ENCODE measurements at regions of chr6 and their contacts with region 1.

Region 1: DNA sequence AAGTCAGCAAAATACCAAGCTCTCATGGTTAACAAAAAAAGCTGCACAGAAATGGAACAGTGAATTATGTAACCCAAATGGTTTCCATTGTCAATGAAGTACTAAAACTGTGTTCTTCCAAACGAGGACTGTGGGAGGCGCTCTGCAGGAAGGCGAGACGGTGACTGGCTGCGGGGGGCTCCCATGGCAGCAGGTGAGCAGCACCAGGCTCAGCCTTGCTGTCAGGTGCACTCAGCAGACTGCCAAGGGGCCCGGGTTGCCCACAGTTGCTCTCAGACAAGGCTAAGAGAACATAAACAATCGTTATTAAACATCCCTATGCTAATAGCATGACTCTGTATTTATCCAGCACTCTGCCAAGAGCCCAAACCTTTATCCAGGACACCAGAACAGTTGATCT is 630.3 kb upstream of the ARID1B start:
- DNase-seq: no peak
- H3K4me3 ChIP-seq: no peak overlapping the region
- H3K27ac ChIP-seq: no peak overlapping the region
- H3K4me1 ChIP-seq: no peaks in the 10 kb centered on the region
- H3K27me3 ChIP-seq: no peaks in the 10 kb centered on the region
- CTCF ChIP-seq: no peak
- EP300 ChIP-seq: no peak
- POLR2A ChIP-seq: no peak

Region 2: DNA sequence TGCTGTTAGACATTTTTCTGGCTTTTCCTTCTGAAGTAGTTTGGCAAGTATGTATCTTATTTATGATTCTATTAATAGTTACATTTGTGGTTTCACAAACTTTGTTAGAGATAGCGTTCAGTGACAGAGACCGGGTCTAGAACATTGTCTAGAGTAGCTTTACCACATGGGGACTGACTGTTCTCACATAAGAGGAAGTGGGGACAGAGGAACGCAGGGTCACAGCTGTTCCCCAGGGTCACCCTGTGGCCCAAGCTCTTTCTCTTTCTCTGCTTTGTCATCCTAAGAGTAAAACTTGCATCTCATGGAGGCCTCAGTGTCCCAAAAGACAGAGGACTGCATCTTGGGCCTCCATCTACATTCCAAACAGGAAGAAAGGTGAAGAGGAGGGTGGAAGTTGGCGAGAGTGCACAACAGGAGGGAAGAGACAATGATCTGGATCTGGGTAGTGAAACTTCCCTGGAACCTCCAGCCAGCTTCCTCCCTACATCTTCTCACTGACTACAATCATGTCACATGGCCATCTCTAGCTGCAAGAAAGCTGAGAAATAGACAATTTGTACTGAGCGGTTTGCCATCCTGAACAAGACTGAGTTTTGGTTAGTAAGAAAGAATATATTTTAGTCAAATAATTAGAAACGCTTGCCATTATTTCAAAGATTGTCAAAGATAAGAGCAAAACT is 15.5 kb before region 1 on chr6:
- in situ Hi-C with region 1: no loop called
- intact Hi-C with region 1: loop called (anchors 1 kb)
- DNase-seq: peak; percentile 14
- H3K4me3 ChIP-seq: no peak overlapping the region
- H3K27ac ChIP-seq: no peak overlapping the region
- H3K4me1 ChIP-seq: no peaks in the 10 kb centered on the region
- H3K27me3 ChIP-seq: no peaks in the 10 kb centered on the region
- CTCF ChIP-seq: no peak
- EP300 ChIP-seq: no peak
- POLR2A ChIP-seq: no peak

Region 3: DNA sequence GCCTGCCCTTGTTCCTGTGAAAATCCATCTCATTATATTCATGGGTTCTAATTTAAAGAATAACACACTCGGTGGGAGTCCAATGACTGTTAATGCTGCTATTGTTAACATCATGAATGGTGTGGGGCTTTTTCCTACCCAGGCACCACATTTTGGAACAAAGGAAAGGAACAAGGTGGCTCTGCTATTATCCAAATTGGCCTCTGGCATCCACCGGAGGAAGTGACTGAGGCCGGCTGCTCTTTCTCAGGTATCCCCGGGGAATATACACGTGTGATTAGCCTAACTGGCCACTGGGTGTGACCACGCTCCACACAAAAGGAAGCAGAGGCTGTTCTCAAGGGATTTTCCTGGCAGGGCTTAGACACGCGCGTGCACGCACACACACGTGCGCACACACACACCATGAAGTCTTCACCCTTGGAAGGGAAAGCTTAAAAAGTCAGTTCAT is 29.1 kb after region 1 on chr6:
- in situ Hi-C with region 1: no loop called
- intact Hi-C with region 1: no loop called
- DNase-seq: peak; percentile 8
- H3K4me3 ChIP-seq: no peak overlapping the region
- H3K27ac ChIP-seq: no peak overlapping the region
- H3K4me1 ChIP-seq: no peaks in the 10 kb centered on the region
- H3K27me3 ChIP-seq: no peaks in the 10 kb centered on the region
- CTCF ChIP-seq: peak in 3 of 5 experiments; percentile 10 to 26 (median 10)
- EP300 ChIP-seq: no peak
- POLR2A ChIP-seq: no peak

Region 4: DNA sequence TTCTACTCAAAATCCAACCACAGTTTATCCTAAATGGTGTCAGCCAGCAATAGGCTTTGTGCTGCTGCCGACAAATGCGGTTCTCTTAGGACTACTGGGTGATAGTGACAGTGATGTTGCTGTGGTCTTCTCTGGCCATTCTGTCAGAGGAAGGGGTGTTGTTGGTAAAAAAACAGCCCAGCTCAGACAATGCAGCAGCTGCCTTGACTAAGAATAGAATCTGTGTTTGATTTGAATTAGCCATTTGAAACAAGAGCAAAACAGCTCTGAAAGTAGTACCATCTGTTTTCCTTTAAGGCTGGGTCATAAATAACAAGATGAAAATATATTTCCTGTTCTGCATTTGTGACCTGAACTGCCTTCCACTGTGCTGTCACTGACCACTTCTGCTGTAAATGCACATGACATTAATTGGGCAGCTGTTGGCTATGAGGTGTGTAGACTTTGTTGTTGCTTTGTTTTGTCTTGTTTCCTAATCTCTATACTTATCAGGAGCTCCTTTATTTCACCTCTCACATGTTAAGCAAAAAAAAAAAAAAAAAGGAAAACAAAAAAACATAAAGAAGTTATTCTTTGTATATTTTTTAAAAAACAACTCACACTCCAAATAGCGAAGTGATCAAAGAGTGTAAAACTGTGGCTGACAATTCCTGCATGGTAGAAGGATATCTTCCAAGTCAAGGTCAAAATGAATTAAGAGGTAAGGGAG is 132.5 kb after region 1 on chr6:
- in situ Hi-C with region 1: no loop called
- intact Hi-C with region 1: no loop called
- DNase-seq: peak; percentile 14
- H3K4me3 ChIP-seq: no peak overlapping the region
- H3K27ac ChIP-seq: peak overlapping the region in 2 of 4 donors; percentile 1 to 43
- H3K4me1 ChIP-seq: peaks cover 0 to 6% (median 0%) of the 10 kb centered on the region in 4 donors
- H3K27me3 ChIP-seq: no peaks in the 10 kb centered on the region
- CTCF ChIP-seq: no peak
- EP300 ChIP-seq: no peak
- POLR2A ChIP-seq: no peak

Region 5: DNA sequence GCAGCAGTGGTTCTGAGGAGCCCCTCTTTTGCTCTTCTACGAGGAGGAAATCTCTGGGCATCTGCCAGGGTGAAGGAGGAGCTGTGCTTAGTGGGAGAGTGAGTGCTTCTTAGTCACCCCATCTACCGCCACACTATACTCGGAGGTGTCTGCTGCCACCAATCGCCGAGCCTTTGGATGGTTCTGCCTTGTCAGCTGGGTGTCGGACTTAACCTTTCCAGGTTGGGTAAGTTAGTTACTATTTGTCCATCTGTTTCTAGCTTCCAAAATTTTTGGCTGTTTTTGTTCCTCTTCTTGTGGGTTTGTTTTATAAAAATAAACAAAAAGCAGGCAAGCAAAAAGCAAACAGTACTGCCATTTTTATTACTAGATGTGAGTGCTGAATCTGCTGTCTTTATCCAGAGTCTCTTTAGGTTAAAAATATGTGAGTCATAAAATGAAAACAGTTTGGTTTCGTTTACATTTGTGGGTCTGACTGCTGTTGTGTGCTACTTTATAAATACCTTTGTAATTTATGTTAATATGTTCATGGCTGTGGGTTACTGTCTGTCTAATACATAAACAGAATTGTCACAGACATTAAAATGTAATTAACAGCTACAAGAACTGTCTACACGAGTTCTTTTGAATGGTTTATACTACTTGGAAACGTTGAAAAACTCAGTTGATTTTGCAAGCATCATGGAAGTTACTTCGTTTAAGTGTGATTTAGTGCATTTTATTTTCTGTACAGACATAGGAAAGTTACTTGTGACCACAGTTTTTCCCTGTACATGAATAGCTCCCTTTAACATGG is 719.5 kb after region 1 on chr6:
- in situ Hi-C with region 1: no loop called
- intact Hi-C with region 1: no loop called
- DNase-seq: peak; percentile 33
- H3K4me3 ChIP-seq: no peak overlapping the region
- H3K27ac ChIP-seq: peak overlapping the region in 1 of 4 donors; percentile 27
- H3K4me1 ChIP-seq: peaks cover 6 to 31% (median 12%) of the 10 kb centered on the region in 4 donors
- H3K27me3 ChIP-seq: no peaks in the 10 kb centered on the region
- CTCF ChIP-seq: no peak
- EP300 ChIP-seq: no peak
- POLR2A ChIP-seq: no peak

Measured in transverse colon (tissue), 4 donors.